T-cell (primary cell): ENCODE measurements at regions of chr11 and their contacts with region 1.

Region 1: DNA sequence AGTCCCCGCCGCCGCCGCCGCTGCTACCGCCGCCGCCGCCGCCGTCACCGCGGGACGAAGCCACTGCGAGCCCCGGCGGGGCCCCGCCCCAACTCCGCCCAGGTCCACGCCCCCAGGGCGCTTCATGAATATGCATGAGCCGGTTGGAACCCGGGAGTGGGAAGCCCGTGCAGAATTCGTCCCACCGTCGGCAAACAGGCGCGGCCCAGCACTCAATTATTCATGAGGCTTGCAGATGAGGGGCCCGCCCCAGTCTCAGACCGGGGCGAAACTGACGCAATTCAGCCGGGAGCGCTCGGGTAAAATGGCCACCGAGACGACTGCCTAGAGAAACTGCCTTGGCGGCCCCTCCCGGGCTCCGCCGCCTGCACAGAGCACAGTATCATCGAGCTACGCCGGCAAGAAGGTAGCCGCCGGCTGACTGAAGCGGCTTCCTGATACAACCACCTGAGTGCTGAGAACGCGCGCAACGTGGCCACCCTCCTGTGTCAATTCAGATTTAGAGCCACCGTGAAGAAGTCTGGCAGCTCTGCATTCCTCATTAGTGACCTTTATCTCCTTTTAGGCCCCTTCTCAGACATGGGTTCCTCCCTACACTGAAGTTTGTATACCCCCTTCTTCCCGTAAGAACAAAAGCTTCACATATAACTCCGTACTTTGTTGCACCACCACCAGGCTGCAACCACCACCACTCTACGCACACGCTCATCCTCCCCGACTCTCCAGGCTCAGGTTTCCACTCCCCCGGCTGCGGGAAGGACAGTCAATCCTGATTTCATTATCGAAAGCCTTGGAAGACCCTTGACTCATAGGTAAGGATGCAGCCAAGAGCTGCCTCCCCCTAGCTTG is at the start of gene TNKS1BP1:
- DNase-seq: peak; percentile 74 to 91 (median 82)
- ATAC-seq: peak; percentile 86 to 88 (median 87)
- H3K4me3 ChIP-seq: peak within 1 kb of the TSS; percentile 70 to 82
- H3K4me3 Mint-ChIP-seq: peak within 1 kb of the TSS; percentile 83 to 96 (median 86)
- H3K27ac ChIP-seq: peak within 1 kb of the TSS; percentile 87
- H3K27ac Mint-ChIP-seq: peak within 1 kb of the TSS; percentile 94 to 95
- H3K4me1 ChIP-seq: peaks cover 8 to 25% of the 10 kb centered on the region in 2 experiments
- H3K4me1 Mint-ChIP-seq: peaks cover 41 to 54% (median 49%) of the 10 kb centered on the region in 3 donors
- H3K27me3 ChIP-seq: no peaks in the 10 kb centered on the region
- H3K27me3 Mint-ChIP-seq: no peaks in the 10 kb centered on the region
- total RNA-seq, gene TNKS1BP1: 13.9 to 22.9 (median 18.9) TPM

Region 2: GRCh38 chr11:57335343-57336110 is 10.4 kb after region 1 on chr11 and contains the start of gene SSRP1:
- CTCF ChIA-PET with region 1: interaction called, 4 to 19 read pairs
- POLR2A ChIA-PET with region 1: interaction called, 6 to 10 read pairs
- DNase-seq: peak; percentile 71 to 92 (median 85)
- ATAC-seq: peak; percentile 98 to 99 (median 99)
- H3K4me3 ChIP-seq: peak within 1 kb of the TSS; percentile 62 to 73
- H3K4me3 Mint-ChIP-seq: peak within 1 kb of the TSS; percentile 82 to 91 (median 88)
- H3K27ac ChIP-seq: peak within 1 kb of the TSS; percentile 87
- H3K27ac Mint-ChIP-seq: peak within 1 kb of the TSS; percentile 98 to 99
- H3K4me1 ChIP-seq: peaks cover 9 to 24% of the 10 kb centered on the region in 2 experiments
- H3K4me1 Mint-ChIP-seq: peaks cover 29 to 33% (median 30%) of the 10 kb centered on the region in 3 donors
- H3K27me3 ChIP-seq: peaks cover 0 to 6% of the 10 kb centered on the region in 2 experiments
- H3K27me3 Mint-ChIP-seq: no peaks in the 10 kb centered on the region
- total RNA-seq, gene SSRP1: 50.2 to 78.1 (median 75.7) TPM